ENCODE measurements at regions of chr10 and their contacts with region 1.

Region 1: DNA sequence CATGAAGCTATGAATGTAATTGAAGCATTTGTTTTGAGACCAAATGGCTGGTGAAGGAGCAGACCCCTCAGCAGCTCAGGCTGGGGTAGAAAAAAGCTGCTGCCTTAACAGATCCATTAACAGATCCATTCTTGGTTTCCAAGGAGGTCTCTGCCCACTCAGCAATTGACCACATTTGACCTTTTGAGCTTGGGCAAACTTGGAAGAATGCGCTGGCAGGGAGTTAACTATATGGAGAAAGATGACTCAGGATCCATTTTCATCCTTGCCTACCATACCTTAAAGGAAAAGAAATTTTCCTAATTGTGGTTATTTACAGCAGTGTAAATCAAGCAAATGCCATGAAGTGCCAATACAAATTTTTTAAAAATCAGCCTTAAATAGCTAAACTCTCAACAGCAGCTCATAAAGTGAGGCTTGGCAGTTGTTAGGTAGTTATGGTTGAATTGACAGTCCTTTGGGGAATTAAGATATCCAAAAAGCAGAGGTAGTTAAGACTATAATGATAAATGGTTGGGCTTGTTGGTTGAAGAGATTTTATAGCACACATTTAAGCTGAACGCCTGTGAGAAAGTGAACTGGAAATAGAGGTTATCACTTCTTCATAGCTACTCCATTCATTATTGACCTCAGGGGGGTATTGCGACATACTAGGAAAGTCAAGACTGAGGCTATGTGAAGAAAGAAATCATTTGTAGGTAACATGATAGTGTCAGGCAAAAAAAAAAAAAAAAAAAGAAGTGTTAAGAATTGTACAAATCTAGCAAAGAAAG is 83.9 kb downstream of the MKX start:
- DNase-seq: no peak
- H3K4me3 Mint-ChIP-seq: no peak overlapping the region
- H3K27ac Mint-ChIP-seq: no peak overlapping the region
- H3K4me1 Mint-ChIP-seq: no peaks in the 10 kb centered on the region
- H3K27me3 Mint-ChIP-seq: peaks cover 32% of the 10 kb centered on the region

Region 2: GRCh38 chr10:27369880-27370279 is 291.8 kb before region 1 on chr10:
- CTCF ChIA-PET with region 1: interaction called, 7 read pairs
- POLR2A ChIA-PET with region 1: no interaction called
- intact Hi-C with region 1: loop called (anchors 2 kb)
- DNase-seq: no peak
- H3K4me3 Mint-ChIP-seq: no peak overlapping the region
- H3K27ac Mint-ChIP-seq: no peak overlapping the region
- H3K4me1 Mint-ChIP-seq: peaks cover 5% of the 10 kb centered on the region
- H3K27me3 Mint-ChIP-seq: peaks cover 3% of the 10 kb centered on the region

Region 3: GRCh38 chr10:27558612-27559020 is 103.1 kb before region 1 on chr10:
- CTCF ChIA-PET with region 1: interaction called, 5 read pairs
- POLR2A ChIA-PET with region 1: no interaction called
- intact Hi-C with region 1: loop called (anchors 1 kb)
- DNase-seq: peak; percentile 42
- H3K4me3 Mint-ChIP-seq: no peak overlapping the region
- H3K27ac Mint-ChIP-seq: no peak overlapping the region
- H3K4me1 Mint-ChIP-seq: no peaks in the 10 kb centered on the region
- H3K27me3 Mint-ChIP-seq: no peaks in the 10 kb centered on the region

Measured in activated CD4-positive, alpha-beta memory T cell treated with anti-CD3 and anti-CD28 coated beads for 36 hours (primary cell).